Calu3 (cell line): ENCODE measurements at regions of chr7 and their contacts with region 1.

Region 1: DNA sequence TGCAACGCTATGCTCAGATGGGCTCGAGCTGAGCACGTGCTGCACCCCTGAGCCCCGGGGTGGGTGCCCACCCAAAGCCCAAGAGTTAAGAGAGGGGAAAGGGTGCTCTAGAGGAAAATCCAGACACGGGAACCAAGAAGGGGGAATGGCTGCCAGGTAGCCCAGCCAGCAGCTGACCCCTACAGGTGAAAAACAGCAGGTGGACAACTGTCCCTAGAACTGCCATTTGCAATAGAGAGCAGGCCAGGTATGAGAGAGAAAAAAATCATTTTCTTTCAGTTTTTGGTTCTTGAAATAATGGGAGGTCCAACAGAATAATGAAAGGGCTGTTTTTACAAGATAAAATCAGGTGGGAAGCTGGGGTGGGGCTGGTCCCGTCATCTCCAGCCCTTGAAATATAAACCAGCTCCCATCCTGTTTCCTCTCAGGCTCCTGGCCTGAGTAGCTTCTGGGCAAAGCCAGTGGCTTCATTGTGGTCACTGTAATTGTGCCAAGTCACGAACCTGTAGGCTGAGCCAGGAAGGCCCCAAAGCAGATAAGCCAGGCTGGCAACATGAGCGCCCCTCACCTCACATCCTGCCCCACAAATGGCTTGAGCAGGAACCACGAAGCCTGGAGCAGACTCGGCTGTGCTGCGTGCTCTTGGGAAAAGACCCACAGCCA is 257.8 kb downstream of the SNX10 start:
- DNase-seq: peak; percentile 94
- H3K4me3 Mint-ChIP-seq: peak overlapping the region; percentile 12
- H3K27ac Mint-ChIP-seq: peak overlapping the region; percentile 85
- H3K4me1 Mint-ChIP-seq: peaks cover 70% of the 10 kb centered on the region
- H3K27me3 Mint-ChIP-seq: no peaks in the 10 kb centered on the region
- CTCF ChIP-seq: peak; percentile 45

Region 2: GRCh38 chr7:26376175-26376917 is 173.1 kb before region 1 on chr7:
- CTCF ChIA-PET with region 1: interaction called, 8 read pairs
- intact Hi-C with region 1: loop called (anchors 1 kb)
- DNase-seq: peak; percentile 84
- H3K4me3 Mint-ChIP-seq: peak overlapping the region; percentile 90
- H3K27ac Mint-ChIP-seq: peak overlapping the region; percentile 64
- H3K4me1 Mint-ChIP-seq: peaks cover 6% of the 10 kb centered on the region
- H3K27me3 Mint-ChIP-seq: no peaks in the 10 kb centered on the region
- CTCF ChIP-seq: no peak

Region 3: GRCh38 chr7:26398756-26399501 is 150.5 kb before region 1 on chr7:
- CTCF ChIA-PET with region 1: interaction called, 8 read pairs
- intact Hi-C with region 1: loop called (anchors 2 kb)
- DNase-seq: peak; percentile 72
- H3K4me3 Mint-ChIP-seq: peak overlapping the region; percentile 92
- H3K27ac Mint-ChIP-seq: peak overlapping the region; percentile 72
- H3K4me1 Mint-ChIP-seq: peaks cover 38% of the 10 kb centered on the region
- H3K27me3 Mint-ChIP-seq: no peaks in the 10 kb centered on the region
- CTCF ChIP-seq: no peak

Region 4: GRCh38 chr7:26508481-26508880 is 40.9 kb before region 1 on chr7:
- CTCF ChIA-PET with region 1: interaction called, 13 read pairs
- intact Hi-C with region 1: loop called (anchors 1 kb)
- DNase-seq: peak; percentile 92
- H3K4me3 Mint-ChIP-seq: peak overlapping the region; percentile 75
- H3K27ac Mint-ChIP-seq: peak overlapping the region; percentile 96
- H3K4me1 Mint-ChIP-seq: peaks cover 26% of the 10 kb centered on the region
- H3K27me3 Mint-ChIP-seq: no peaks in the 10 kb centered on the region
- CTCF ChIP-seq: no peak

Region 5: DNA sequence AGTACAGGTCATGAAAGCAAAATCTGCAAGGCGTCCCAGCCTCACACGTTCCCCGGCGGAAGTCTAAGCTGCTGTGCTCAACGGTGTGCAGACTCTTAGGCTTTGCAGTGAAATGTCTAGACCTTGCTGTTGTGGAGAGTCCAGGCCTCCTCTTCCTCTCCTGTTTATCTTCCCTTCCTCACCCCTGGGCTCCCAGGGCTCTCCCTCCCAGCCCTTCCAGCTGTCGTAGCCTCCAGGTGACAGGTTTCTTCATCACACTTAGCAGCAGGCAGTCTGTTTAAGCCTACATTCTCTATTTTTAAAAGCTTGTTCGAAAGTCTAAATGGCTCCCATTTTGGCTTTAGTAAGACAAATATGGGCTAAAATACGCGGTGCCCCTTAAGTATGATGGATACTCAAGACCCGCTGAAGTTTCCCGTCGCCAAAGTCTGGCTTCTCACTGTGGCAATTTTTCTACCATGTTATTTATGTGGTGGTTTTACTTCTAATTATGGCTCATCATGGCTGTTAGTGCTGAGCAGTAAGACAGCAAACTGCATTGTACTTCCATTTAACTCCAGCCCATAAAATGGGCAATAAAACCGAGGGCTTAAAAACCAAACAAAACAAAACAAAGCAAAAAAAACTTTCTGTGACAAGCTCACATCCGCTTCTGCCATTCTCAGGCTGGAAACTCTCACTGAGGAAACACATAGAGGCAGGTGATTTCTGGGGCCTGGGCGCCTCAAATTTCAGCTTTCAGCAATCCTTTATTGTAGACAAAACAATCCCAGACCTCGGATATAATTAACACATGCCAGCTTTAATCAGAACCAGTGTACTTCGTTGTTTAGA is 14.5 kb before region 1 on chr7:
- CTCF ChIA-PET with region 1: interaction called, 11 read pairs
- intact Hi-C with region 1: no loop called
- DNase-seq: no peak
- H3K4me3 Mint-ChIP-seq: no peak overlapping the region
- H3K27ac Mint-ChIP-seq: no peak overlapping the region
- H3K4me1 Mint-ChIP-seq: peaks cover 39% of the 10 kb centered on the region
- H3K27me3 Mint-ChIP-seq: no peaks in the 10 kb centered on the region
- CTCF ChIP-seq: no peak